ENCODE measurements at regions of chr20 and their contacts with region 1.

Region 1: DNA sequence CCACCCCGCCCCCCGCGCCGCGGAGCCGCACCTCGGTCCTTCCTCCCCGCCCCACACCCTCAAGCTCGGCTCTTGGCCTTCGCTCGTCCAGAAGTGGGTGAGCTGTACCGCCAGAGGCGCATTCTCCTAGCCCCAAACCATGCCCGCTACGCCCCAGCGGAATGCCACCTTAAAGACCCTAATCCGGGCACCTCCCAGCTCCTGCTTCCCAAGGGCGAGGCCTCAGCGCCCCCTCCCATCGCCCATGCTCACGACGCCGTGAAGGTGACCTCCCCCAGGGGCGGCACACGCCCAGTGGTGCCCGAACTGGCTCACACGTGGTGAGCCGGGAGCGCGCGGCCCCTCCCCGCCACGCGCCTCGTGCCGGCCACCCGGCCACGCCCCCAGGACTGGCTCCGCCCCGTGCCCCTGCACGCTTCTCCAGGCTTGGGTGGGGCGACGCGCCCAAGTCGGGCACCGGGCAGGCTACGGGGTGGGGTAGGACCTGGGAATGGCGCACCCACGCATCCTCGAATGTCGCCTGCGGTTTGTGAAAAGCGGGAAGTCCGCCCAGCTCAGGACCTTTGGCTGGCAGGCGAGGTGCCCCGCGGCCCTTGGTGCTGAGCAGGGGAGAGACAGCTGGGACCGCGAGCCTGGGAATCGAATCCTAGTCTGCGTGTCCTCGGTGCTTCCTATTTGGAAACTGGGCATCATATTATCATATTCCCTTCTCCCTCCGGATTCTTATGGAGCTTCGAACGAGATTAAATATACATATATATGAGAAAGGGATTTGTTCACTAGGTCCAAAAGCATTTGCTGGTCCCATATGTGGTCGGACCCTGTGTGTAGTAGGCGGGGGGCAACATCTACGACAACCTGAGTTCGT is 941 bp upstream of the SOX12 start:
- DNase-seq: peak; percentile 78 to 89 (median 80)
- ATAC-seq: peak; percentile 74
- H3K4me3 ChIP-seq: peak overlapping the region; percentile 65
- H3K27ac ChIP-seq: peak overlapping the region; percentile 95
- H3K4me1 ChIP-seq: peaks cover 8 to 49% of the 10 kb centered on the region in 2 experiments; a peak in 4 of 5 replicates
- H3K27me3 ChIP-seq: no peaks in the 10 kb centered on the region
- CTCF ChIP-seq: peak; percentile 1 to 24 (median 16); a peak in 1 of 6 replicates
- EP300 ChIP-seq: no peak
- POLR2A ChIP-seq: peak; percentile 65
- RAD21 ChIP-seq: no peak

Region 2: DNA sequence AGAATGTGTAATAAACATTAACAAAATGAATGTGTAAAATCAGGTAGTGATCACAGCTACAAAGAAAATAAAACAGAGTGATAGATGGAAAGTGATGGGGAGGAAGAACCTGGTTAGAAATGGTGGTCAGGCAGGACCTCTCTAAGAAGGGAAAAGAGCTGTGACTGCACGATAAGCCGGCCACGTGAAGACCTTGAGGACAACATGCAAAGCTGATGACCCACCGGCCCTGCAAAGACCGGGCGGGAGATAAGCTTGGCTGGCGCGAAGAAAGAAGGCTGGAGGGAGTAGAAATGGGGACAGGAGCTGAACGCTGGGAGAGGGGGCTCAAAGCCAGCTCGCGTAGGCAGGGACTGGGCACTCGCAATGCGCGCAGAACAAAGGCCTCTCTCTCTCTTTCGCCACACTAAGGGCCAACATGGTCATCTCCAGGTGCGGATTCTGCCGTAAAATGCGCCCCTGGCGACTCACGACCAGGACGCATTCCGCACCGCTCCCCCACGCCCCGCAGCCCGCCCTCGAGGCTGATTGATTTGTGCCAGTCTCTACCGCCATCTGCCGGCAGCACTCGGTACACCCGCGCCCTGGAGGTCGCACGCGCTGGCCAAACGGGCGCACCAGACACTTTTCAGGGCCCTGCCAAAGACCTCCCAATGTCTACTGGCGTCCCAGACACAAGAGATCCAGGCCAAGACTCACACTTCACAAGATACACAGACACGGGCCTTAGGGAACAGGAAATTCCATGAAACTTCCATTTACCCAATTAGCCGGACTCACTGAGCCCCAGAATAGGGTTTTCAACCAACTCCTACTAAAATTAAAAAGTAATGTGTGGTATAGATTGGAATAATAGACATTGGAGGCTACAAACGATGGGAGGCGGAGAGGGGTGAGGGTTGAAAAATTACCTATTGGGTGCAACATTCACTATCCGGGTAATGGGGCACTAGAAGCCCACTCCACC is 57.5 kb before region 1 on chr20:
- CTCF ChIA-PET with region 1: interaction called, 3 read pairs
- POLR2A ChIA-PET with region 1: no interaction called
- in situ Hi-C with region 1: no loop called
- intact Hi-C with region 1: loop called (anchors 2 kb)
- DNase-seq: peak; percentile 87 to 92 (median 88)
- ATAC-seq: peak; percentile 91
- H3K4me3 ChIP-seq: 0 out of 2 replicates have a peak overlapping the region, but pooled peaks have one; percentile 17
- H3K27ac ChIP-seq: peak overlapping the region; percentile 71
- H3K4me1 ChIP-seq: peaks cover 9 to 18% of the 10 kb centered on the region in 2 experiments; a peak in 4 of 5 replicates
- H3K27me3 ChIP-seq: no peaks in the 10 kb centered on the region
- CTCF ChIP-seq: peak; percentile 86 to 96 (median 88)
- EP300 ChIP-seq: peak; percentile 52; the same call in 1 of the 2 replicates
- POLR2A ChIP-seq: peak; percentile 68
- RAD21 ChIP-seq: peak; percentile 86 to 94

Region 3: DNA sequence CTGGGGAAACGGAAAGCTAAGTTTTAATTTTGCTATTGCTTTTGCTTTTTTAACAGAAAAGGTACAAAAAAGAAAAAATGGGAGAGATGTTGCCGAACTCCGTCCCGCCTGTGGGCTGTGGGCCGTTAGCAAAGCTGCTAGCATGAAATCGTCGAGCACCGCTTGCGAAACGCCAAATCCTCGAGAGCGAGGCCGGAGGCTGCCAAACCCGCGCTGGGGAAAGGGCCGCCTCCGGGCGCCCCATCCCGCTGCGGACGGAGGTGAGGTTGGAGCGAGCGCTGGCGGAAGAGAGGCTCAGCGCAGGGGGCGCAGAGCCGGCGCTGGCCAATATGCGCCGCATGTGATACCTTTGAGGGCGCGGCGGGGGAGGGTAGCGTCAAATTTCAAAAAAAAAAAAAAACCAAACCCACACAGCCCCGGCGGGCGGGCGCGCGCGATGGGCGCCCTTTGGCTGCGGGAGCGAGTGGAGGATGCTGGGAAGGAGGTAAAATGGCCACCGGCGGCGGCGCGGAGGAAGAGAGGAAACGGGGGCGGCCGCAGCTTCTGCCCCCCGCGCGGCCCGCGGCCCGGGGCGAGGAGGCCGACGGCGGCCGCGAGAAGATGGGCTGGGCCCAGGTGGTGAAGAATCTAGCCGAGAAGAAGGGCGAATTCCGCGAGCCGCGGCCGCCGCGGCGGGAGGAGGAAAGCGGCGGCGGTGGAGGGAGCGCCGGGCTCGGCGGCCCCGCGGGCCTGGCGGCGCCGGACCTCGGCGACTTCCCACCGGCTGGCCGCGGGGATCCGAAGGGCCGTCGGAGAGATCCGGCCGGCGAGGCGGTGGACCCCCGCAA is 27.1 kb before region 1 on chr20 and contains the start of gene ZCCHC3:
- CTCF ChIA-PET with region 1: no interaction called
- POLR2A ChIA-PET with region 1: interaction called, 5 read pairs
- in situ Hi-C with region 1: no loop called
- intact Hi-C with region 1: loop called (anchors 2 kb)
- DNase-seq: peak; percentile 68 to 93 (median 78)
- ATAC-seq: peak; percentile 94
- H3K4me3 ChIP-seq: peak within 1 kb of the TSS; percentile 90
- H3K27ac ChIP-seq: peak within 1 kb of the TSS; percentile 93
- H3K4me1 ChIP-seq: peaks cover 21 to 22% of the 10 kb centered on the region in 2 experiments; a peak in 4 of 5 replicates
- H3K27me3 ChIP-seq: no peaks in the 10 kb centered on the region
- CTCF ChIP-seq: peak in 2 of 3 experiments; percentile 47 to 51; a peak in 4 of 6 replicates
- EP300 ChIP-seq: no peak
- POLR2A ChIP-seq: peak; percentile 67
- RAD21 ChIP-seq: peak in 1 of 2 experiments; percentile 11; a peak in 1 of 4 replicates
- polyA plus RNA-seq, gene ZCCHC3: 2.8 to 4.0 TPM

Region 4: GRCh38 chr20:621125-621756 is 296.8 kb after region 1 on chr20:
- CTCF ChIA-PET with region 1: no interaction called
- POLR2A ChIA-PET with region 1: no interaction called
- in situ Hi-C with region 1: no loop called
- intact Hi-C with region 1: no loop called
- DNase-seq: no peak
- ATAC-seq: no peak
- H3K4me3 ChIP-seq: no peak overlapping the region
- H3K27ac ChIP-seq: no peak overlapping the region
- H3K4me1 ChIP-seq: peaks cover 7 to 11% of the 10 kb centered on the region in 2 experiments; a peak in 4 of 5 replicates
- H3K27me3 ChIP-seq: no peaks in the 10 kb centered on the region
- CTCF ChIP-seq: no peak
- EP300 ChIP-seq: no peak
- POLR2A ChIP-seq: no peak
- RAD21 ChIP-seq: no peak